ENCODE measurements at regions of chr13 and their contacts with region 1.

Region 1: GRCh38 chr13:73228546-73228945 is 169.7 kb downstream of the KLF5 start:
- DNase-seq: peak in 4 of 9 experiments; percentile 3 to 66 (median 23)
- ATAC-seq: peak; percentile 69
- H3K4me3 ChIP-seq: no peak overlapping the region
- H3K4me3 Mint-ChIP-seq: no peak overlapping the region
- H3K27ac ChIP-seq: peak overlapping the region in 1 of 2 experiments; percentile 18
- H3K27ac Mint-ChIP-seq: peak overlapping the region; percentile 60
- H3K4me1 ChIP-seq: peaks cover 42% of the 10 kb centered on the region
- H3K4me1 Mint-ChIP-seq: peaks cover 44% of the 10 kb centered on the region
- H3K27me3 ChIP-seq: no peaks in the 10 kb centered on the region
- H3K27me3 Mint-ChIP-seq: no peaks in the 10 kb centered on the region
- CTCF ChIP-seq: no peak

Region 2: DNA sequence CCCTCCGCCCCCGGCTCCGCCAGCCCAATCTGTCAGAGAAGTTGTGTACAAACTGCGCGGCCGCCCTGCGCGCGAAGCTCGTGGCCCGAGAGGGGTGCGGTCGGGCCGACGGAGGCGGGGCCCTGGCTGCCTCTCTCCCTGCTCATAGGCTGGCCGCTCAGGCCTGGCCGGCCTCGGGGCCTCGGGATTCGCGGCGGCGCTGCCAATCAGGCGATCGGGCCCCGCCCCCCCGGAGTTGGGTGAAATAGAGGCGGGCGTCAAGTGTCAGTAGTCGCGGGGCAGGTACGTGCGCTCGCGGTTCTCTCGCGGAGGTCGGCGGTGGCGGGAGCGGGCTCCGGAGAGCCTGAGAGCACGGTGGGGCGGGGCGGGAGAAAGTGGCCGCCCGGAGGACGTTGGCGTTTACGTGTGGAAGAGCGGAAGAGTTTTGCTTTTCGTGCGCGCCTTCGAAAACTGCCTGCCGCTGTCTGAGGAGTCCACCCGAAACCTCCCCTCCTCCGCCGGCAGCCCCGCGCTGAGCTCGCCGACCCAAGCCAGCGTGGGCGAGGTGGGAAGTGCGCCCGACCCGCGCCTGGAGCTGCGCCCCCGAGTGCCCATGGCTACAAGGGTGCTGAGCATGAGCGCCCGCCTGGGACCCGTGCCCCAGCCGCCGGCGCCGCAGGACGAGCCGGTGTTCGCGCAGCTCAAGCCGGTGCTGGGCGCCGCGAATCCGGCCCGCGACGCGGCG is 169.6 kb before region 1 on chr13 and contains the start of gene KLF5:
- CTCF ChIA-PET with region 1: no interaction called
- POLR2A ChIA-PET with region 1: no interaction called
- intact Hi-C with region 1: loop called in 1 of 2 experiments (anchors 5 kb)
- DNase-seq: peak; percentile 85 to 96 (median 93)
- ATAC-seq: peak; percentile 95
- H3K4me3 ChIP-seq: peak within 1 kb of the TSS; percentile 53 to 54
- H3K4me3 Mint-ChIP-seq: peak within 1 kb of the TSS; percentile 93
- H3K27ac ChIP-seq: no peak within 1 kb of the TSS
- H3K27ac Mint-ChIP-seq: peak within 1 kb of the TSS; percentile 72
- H3K4me1 ChIP-seq: peaks cover 14% of the 10 kb centered on the region
- H3K4me1 Mint-ChIP-seq: peaks cover 21% of the 10 kb centered on the region
- H3K27me3 ChIP-seq: peaks cover 11 to 12% of the 10 kb centered on the region in 2 experiments
- H3K27me3 Mint-ChIP-seq: peaks cover 40% of the 10 kb centered on the region
- CTCF ChIP-seq: no peak
- total RNA-seq, gene KLF5: 3.4 to 3.7 TPM

Region 3: DNA sequence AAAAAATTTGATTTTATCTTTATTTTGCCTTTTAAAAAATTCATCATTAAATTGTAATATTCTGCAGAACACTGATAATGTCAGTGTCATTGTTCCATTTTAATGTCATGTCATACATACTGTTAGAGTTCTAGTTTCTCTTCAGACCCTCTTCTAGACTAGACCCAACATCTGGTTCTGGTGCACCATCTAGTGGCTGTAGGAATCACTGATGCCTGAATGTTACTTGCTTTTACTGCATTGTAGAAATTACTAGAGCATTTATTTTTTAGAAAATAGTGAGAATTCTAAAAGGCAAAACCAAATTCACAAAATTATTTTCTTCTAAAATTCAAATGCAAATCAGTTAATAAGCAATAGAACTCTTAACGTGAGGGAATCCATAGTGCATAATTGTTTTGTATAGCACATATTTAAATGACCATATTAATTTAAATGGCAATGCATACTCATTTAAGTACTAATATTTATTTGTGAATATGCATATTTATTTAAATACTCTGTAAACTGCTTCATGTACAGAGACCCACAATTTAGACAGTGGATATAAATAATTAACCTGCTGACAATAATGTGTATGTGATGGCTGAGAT is 479.9 kb after region 1 on chr13:
- CTCF ChIA-PET with region 1: interaction called, 3 read pairs
- POLR2A ChIA-PET with region 1: no interaction called
- intact Hi-C with region 1: loop called (anchors 2 to 5 kb)
- DNase-seq: peak; percentile 9 to 83 (median 52)
- ATAC-seq: peak; percentile 94
- H3K4me3 ChIP-seq: no peak overlapping the region
- H3K4me3 Mint-ChIP-seq: no peak overlapping the region
- H3K27ac ChIP-seq: no peak overlapping the region
- H3K27ac Mint-ChIP-seq: no peak overlapping the region
- H3K4me1 ChIP-seq: peaks cover 8% of the 10 kb centered on the region
- H3K4me1 Mint-ChIP-seq: peaks cover 11% of the 10 kb centered on the region
- H3K27me3 ChIP-seq: no peaks in the 10 kb centered on the region
- H3K27me3 Mint-ChIP-seq: no peaks in the 10 kb centered on the region
- CTCF ChIP-seq: peak; percentile 92

Region 4: DNA sequence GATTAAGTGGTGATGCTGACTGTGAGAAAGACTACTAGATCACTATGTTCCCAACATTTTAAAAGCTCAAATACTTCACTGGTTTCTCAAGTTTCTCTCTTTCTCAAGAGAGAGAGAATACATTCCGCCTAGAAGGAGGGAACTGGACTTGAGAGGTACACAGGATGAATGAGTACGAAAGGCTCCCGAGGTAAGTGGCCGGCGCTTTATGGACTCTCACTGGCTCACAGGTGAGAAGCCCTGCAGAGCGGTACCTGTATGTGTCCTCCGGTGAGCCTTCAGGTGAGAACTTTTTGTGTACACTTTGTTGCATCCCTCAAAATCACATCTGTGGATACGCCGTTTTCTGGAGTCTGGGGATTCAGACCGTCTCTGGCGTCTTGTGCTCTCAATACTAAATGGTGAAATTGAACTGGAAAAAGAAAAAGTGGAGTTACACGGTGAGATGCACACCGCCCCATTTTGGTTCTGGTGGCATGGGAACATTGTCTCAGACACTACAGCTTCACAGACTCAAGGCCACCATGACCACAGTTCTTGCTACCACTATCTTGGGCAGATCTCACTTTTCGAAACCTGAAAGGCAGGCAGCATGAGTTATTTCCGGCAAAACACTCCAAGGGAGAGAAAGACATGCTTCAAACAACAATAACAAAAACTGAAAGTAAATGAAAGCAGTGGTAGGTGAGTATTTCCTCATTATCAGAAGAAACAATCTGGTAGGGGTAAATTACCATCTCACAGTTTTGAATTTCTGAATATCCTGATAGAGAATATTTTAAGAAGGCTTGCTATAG is 486.8 kb after region 1 on chr13:
- CTCF ChIA-PET with region 1: interaction called, 3 read pairs
- POLR2A ChIA-PET with region 1: no interaction called
- intact Hi-C with region 1: loop called in 1 of 2 experiments (anchors 5 kb)
- DNase-seq: peak in 8 of 9 experiments; percentile 35 to 94 (median 58)
- ATAC-seq: peak; percentile 84
- H3K4me3 ChIP-seq: peak overlapping the region in 1 of 2 experiments; percentile 15
- H3K4me3 Mint-ChIP-seq: peak overlapping the region; percentile 67
- H3K27ac ChIP-seq: peak overlapping the region; percentile 22 to 84
- H3K27ac Mint-ChIP-seq: peak overlapping the region; percentile 94
- H3K4me1 ChIP-seq: peaks cover 37% of the 10 kb centered on the region
- H3K4me1 Mint-ChIP-seq: peaks cover 46% of the 10 kb centered on the region
- H3K27me3 ChIP-seq: no peaks in the 10 kb centered on the region
- H3K27me3 Mint-ChIP-seq: no peaks in the 10 kb centered on the region
- CTCF ChIP-seq: no peak

Measured in CD8-positive, alpha-beta T cell (primary cell).